ENCODE measurements at regions of chr3 and their contacts with region 1.

Region 1: DNA sequence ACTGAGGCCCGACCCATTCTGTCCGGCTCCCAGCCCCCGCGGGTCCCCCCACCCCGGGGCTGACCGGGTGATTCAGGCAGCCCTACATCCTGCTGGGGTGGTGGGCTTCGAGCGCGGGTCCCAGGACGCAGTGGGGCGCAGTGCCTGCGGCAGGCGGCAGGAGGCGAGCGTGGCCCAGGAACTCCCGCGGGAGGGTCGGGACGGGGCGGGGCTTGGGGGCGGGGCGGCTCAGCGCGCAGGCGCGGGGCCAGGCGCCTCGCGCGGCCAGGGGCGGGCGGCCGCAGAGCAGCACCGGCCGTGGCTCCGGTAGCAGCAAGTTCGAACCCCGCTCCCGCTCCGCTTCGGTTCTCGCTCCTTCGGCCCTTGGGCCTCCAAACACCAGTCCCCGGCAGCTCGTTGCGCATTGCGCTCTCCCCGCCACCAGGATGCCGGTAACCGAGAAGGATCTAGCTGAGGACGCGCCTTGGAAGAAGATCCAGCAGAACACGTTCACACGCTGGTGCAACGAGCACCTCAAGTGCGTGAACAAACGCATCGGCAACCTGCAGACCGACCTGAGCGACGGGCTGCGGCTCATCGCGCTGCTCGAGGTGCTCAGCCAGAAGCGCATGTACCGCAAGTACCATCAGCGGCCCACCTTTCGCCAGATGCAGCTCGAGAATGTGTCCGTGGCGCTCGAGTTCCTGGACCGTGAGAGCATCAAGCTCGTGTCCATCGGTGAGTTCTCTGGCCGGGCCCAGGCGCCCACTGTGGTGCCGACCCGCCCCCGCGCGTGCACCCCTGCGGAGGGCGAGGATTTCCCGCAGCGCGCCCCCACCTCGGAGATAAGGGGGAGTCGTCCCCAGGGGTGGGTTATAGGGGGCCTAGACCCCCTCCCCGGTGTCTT is at the start of gene FLNB:
- DNase-seq: peak; percentile 69 to 83 (median 75)
- H3K4me3 ChIP-seq: peak within 1 kb of the TSS; percentile 52 to 92 (median 85)
- H3K27ac ChIP-seq: peak within 1 kb of the TSS in 3 of 5 donors; percentile 52 to 83 (median 78)
- H3K4me1 ChIP-seq: peaks cover 22 to 32% of the 10 kb centered on the region in 2 donors
- H3K27me3 ChIP-seq: no peaks in the 10 kb centered on the region
- CTCF ChIP-seq: peak; percentile 47 to 88 (median 72)
- POLR2A ChIP-seq: peak in 1 of 2 donors; percentile 51
- total RNA-seq, gene FLNB: 84.6 to 278 (median 124) TPM

Region 2: DNA sequence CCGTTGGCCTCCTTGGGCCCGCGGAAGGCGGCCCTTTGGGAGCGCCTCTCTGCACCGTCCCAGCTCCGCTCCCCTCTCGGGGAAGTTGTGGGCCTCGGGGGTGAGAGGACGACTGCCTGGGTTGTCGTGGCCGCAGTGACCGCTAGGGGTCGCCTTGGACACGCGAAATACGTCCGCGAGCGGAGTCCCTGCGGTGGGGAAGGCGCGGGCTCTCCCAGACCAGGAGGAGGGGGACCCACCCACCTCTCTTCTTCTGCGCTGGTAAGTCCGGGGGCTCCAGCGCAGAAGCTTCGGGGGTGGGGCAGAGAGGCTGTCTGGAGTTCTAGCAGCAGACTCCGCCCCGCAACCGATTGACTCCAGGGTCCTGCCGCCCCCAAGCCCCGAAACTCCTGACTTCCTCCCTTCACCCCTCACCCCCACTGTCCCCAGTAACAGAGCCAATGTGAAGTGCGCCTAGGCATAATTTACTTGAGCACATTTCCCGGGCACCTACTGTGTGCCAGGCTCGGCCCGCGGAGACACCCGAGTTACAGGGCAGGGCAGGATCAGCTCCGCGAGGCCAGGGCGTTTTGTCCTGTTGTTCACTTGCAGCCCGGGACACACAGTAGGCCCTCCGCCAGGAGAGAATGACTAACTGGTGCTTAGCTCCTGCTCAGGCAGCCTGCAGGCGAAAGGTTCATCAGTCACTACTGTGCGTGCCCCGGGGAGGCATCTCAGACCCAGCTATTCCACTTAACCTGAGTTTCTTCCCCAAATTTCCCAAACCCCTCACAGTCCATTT is 169.6 kb after region 1 on chr3:
- intact Hi-C with region 1: loop called (anchors 5 to 10 kb)
- DNase-seq: peak; percentile 87 to 94 (median 92)
- H3K4me3 ChIP-seq: peak overlapping the region in 2 of 4 donors; percentile 11 to 57
- H3K27ac ChIP-seq: no peak overlapping the region
- H3K4me1 ChIP-seq: peaks cover 12 to 28% of the 10 kb centered on the region in 2 donors
- H3K27me3 ChIP-seq: no peaks in the 10 kb centered on the region
- CTCF ChIP-seq: peak; percentile 81 to 95 (median 92)
- POLR2A ChIP-seq: no peak

Region 3: GRCh38 chr3:58305882-58306711 is 297.7 kb after region 1 on chr3 and contains the starts of genes HTD2 and RPP14:
- intact Hi-C with region 1: loop called in 1 of 2 experiments (anchors 10 kb)
- DNase-seq: peak; percentile 98 to 99 (median 99)
- H3K4me3 ChIP-seq: peak within 1 kb of the TSS; percentile 9 to 96 (median 58)
- H3K27ac ChIP-seq: peak within 1 kb of the TSS; percentile 91 to 100 (median 98)
- H3K4me1 ChIP-seq: peaks cover 19 to 26% of the 10 kb centered on the region in 2 donors
- H3K27me3 ChIP-seq: no peaks in the 10 kb centered on the region
- CTCF ChIP-seq: peak; percentile 95 to 98 (median 96)
- POLR2A ChIP-seq: peak; percentile 64 to 89
- total RNA-seq, gene HTD2: 6.6 to 13.2 (median 11.0) TPM
- total RNA-seq, gene RPP14: 9.2 to 23.2 (median 15.2) TPM

Measured in adrenal gland (tissue), 19 donors.